CD4-positive, alpha-beta T cell (primary cell): ENCODE measurements at regions of chr16 and their contacts with region 1.

Region 1: DNA sequence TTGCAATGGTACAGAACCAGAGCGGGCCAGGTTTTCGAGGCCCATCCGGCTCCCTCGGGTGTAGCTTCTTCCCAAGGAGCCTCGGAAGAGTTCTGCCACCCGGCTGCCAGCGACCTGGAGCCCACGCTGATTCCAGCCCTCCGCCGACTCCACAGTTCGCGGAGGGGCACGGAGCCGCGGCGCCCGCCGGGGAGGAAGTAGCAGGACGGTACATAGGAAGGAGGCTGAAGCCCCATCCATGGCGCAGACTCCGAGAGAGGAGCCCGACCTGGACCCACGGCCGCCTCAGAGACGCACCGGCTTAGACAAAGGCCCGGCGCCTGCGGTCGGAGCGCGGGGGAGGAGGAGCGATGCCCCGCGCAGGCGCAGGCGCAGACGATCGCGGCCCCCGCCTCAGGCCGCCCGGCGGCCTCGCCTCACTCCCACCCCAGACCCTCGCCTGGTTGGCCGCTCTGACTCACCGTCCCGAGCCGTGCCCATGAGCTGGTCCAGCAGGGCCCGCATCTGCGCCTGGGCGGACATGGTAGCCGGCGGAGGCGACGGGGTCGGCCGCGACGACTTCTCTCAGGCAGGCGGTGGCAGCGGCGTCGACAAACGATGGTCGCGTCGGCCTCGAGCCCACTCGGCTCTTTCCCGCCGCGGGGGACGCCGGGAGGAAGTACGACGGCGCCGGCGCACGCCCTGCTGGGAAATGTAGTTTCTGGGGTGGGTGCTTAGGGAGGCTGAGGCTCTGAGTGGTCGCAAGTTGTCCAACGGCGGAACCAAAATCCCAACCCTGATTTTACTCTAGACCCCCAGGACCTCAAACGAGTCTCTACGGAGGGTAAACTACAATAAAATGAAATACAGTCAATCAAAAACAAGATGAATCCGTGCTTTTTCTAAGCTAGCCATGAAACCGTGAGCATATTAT is at the start of gene LUC7L:
- DNase-seq: peak; percentile 75 to 92 (median 80)
- ATAC-seq: peak; percentile 86
- H3K4me3 ChIP-seq: peak within 1 kb of the TSS; percentile 96
- H3K4me3 Mint-ChIP-seq: peak within 1 kb of the TSS; percentile 90
- H3K27ac ChIP-seq: peak within 1 kb of the TSS; percentile 86 to 91
- H3K27ac Mint-ChIP-seq: peak within 1 kb of the TSS; percentile 86
- H3K4me1 ChIP-seq: peaks cover 24% of the 10 kb centered on the region
- H3K4me1 Mint-ChIP-seq: peaks cover 39% of the 10 kb centered on the region
- H3K27me3 ChIP-seq: no peaks in the 10 kb centered on the region
- H3K27me3 Mint-ChIP-seq: no peaks in the 10 kb centered on the region
- CTCF ChIP-seq: no peak
- total RNA-seq, gene LUC7L: 94.8 to 98.4 TPM

Region 2: DNA sequence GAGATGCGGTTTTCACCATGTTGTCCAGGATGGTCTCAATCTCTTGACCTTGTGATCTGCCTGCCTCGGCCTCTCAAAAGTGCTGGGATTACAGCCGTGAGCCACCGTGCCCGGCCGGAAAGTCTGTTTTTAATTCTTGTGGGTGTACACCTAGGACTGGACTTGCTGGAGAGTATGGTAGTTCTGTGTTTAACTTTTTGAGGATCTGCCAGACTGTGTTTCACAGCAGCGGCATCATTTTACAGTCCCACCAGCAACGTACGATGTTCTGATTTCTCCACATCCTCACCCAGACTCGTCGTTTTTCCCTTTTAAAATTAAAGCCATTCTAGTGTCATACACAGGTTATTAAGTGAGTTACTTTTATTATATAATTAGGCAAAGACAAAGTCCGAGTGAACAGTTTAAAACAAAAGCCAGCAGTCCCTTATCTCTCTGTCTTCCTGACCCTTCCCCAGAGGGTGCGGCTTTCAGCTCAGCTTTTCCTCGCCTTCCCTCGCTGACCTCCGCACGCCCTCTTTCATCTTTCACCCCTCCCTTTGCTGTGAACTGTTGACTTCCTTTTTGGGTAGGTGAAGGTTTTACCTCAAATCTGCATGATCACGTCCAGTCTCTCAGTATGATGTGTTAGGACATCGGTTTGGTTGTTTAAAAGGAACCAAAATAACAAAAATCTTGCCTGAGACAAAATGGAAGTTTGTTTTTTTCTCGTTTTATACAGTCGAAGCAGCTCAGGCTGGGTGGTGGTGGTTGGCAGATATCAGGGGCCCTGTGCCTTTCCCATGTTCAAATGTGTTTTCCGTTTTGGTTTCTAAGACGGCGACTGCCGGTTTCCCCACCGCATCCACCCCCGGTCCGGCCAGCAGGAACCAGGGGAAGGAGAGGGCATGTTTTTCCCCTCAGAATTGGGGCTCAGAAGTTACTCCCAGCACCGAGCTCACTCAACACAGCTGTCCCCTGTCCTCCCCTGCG is 23.6 kb after region 1 on chr16:
- CTCF ChIA-PET with region 1: interaction called, 3 read pairs
- POLR2A ChIA-PET with region 1: interaction called, 10 read pairs
- intact Hi-C with region 1: no loop called
- DNase-seq: peak in 4 of 14 experiments; percentile 27 to 50 (median 48)
- ATAC-seq: peak; percentile 63
- H3K4me3 ChIP-seq: peak overlapping the region; percentile 31
- H3K4me3 Mint-ChIP-seq: peak overlapping the region; percentile 89
- H3K27ac ChIP-seq: peak overlapping the region; percentile 48 to 67
- H3K27ac Mint-ChIP-seq: peak overlapping the region; percentile 88
- H3K4me1 ChIP-seq: peaks cover 35% of the 10 kb centered on the region
- H3K4me1 Mint-ChIP-seq: peaks cover 29% of the 10 kb centered on the region
- H3K27me3 ChIP-seq: no peaks in the 10 kb centered on the region
- H3K27me3 Mint-ChIP-seq: no peaks in the 10 kb centered on the region
- CTCF ChIP-seq: no peak

Region 3: GRCh38 chr16:324451-325334 is 95.6 kb after region 1 on chr16:
- CTCF ChIA-PET with region 1: no interaction called
- POLR2A ChIA-PET with region 1: interaction called, 11 read pairs
- intact Hi-C with region 1: no loop called
- DNase-seq: peak; percentile 56 to 94 (median 72)
- ATAC-seq: peak; percentile 80
- H3K4me3 ChIP-seq: peak overlapping the region; percentile 57
- H3K4me3 Mint-ChIP-seq: peak overlapping the region; percentile 77
- H3K27ac ChIP-seq: peak overlapping the region; percentile 77 to 89
- H3K27ac Mint-ChIP-seq: peak overlapping the region; percentile 90
- H3K4me1 ChIP-seq: peaks cover 80% of the 10 kb centered on the region
- H3K4me1 Mint-ChIP-seq: peaks cover 60% of the 10 kb centered on the region
- H3K27me3 ChIP-seq: no peaks in the 10 kb centered on the region
- H3K27me3 Mint-ChIP-seq: no peaks in the 10 kb centered on the region
- CTCF ChIP-seq: no peak

Region 4: DNA sequence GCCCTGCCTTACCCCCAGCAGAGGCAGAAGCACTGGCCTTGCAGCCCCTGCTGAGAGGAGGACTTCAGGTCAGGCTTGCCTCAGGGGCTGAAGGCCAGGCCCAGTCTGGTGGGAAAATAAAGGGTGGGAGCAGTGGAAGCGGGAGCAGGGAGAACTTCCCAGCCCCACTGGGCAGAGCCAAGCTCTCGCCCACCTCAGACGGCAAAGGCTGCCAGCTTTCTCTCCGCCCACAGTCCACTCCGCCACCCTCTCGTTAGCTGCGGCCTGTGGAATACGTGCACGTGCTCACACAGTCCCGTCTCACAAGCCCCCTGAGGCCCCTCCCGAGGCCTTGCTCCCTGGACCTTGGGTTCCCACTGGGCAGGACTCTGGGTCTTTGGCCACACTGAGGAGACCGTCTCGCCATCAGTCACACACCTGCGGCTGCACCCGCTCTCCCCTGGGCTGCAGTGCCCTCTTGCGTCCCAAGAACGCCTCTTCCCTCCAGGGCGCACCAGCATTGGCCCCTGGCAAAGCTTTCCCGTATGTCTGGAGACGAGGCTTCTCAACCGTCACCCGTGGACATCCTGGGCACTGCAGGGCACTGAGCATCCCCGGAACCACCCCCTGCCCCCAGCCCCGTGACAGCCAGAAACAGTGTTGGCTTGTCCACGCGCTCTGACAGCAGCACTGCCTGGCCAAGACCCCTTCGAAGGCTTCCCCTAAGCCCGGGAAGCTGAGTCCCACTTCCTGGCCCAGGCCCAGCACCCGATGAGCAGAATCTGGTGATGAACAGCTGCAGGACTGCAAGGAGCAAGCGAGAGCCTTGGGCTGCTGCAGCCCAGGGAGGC is 133.0 kb after region 1 on chr16:
- CTCF ChIA-PET with region 1: interaction called, 11 read pairs
- POLR2A ChIA-PET with region 1: no interaction called
- intact Hi-C with region 1: no loop called
- DNase-seq: peak; percentile 63 to 88 (median 71)
- ATAC-seq: peak; percentile 99
- H3K4me3 ChIP-seq: no peak overlapping the region
- H3K4me3 Mint-ChIP-seq: peak overlapping the region; percentile 46
- H3K27ac ChIP-seq: no peak overlapping the region
- H3K27ac Mint-ChIP-seq: peak overlapping the region; percentile 50
- H3K4me1 ChIP-seq: peaks cover 22% of the 10 kb centered on the region
- H3K4me1 Mint-ChIP-seq: peaks cover 6% of the 10 kb centered on the region
- H3K27me3 ChIP-seq: no peaks in the 10 kb centered on the region
- H3K27me3 Mint-ChIP-seq: no peaks in the 10 kb centered on the region
- CTCF ChIP-seq: peak; percentile 72